IMR-90 (cell line): ENCODE measurements at regions of chr14 and their contacts with region 1.

Region 1: DNA sequence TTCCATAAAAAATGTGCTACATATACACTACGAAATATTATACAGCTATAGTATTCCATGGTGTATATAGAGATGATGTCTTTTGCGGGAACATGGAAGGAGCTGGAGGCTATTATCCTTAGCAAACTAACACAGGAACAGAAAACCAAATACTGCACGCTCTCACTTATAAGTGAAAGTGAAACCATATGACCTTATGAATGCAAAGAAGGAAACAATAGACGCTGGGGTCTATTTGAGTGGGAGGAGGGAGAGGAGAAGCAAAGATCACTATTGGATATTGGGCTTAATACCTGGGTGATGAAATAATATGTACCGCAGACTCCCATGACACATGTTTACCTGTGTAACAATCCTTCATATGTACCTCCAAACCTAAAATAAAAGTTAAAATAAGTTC is 142.8 kb downstream of the LRFN5 start:
- DNase-seq: no peak
- ATAC-seq: no peak
- H3K4me3 ChIP-seq: no peak overlapping the region
- H3K27ac ChIP-seq: no peak overlapping the region
- H3K4me1 ChIP-seq: no peaks in the 10 kb centered on the region
- H3K27me3 ChIP-seq: no peaks in the 10 kb centered on the region
- CTCF ChIP-seq: no peak
- POLR2A ChIP-seq: no peak
- RAD21 ChIP-seq: no peak

Region 2: GRCh38 chr14:40296821-40297220 is 1452.6 kb before region 1 on chr14:
- CTCF ChIA-PET with region 1: no interaction called
- POLR2A ChIA-PET with region 1: no interaction called
- dilution Hi-C with region 1: no loop called
- in situ Hi-C with region 1: no loop called
- intact Hi-C with region 1: loop called (anchors 5 kb)
- DNase-seq: no peak
- ATAC-seq: no peak
- H3K4me3 ChIP-seq: no peak overlapping the region
- H3K27ac ChIP-seq: no peak overlapping the region
- H3K4me1 ChIP-seq: no peaks in the 10 kb centered on the region
- H3K27me3 ChIP-seq: no peaks in the 10 kb centered on the region
- CTCF ChIP-seq: no peak
- POLR2A ChIP-seq: no peak
- RAD21 ChIP-seq: no peak

Region 3: DNA sequence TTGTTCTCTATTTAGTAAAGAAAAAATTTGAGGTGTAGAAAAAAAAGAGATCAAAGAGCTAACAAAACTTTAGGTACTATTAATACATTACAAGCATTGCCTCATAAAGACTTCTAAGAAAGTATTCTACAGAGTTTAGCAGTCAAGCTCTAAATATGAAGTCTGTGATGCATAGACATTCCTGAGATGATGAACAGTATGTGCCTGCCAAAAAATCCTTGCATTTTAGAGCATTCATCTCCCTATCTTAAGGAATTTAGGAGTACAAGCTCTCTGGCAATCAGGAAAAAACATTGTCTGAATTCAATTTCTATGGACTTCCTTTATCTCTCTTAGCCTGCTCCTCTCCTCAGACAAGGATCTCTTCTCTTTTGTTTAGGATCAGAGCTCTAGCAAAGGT is 345.3 kb before region 1 on chr14:
- CTCF ChIA-PET with region 1: no interaction called
- POLR2A ChIA-PET with region 1: no interaction called
- dilution Hi-C with region 1: no loop called
- in situ Hi-C with region 1: no loop called
- intact Hi-C with region 1: no loop called
- DNase-seq: no peak
- ATAC-seq: no peak
- H3K4me3 ChIP-seq: no peak overlapping the region
- H3K27ac ChIP-seq: no peak overlapping the region
- H3K4me1 ChIP-seq: no peaks in the 10 kb centered on the region
- H3K27me3 ChIP-seq: no peaks in the 10 kb centered on the region
- CTCF ChIP-seq: no peak
- POLR2A ChIP-seq: no peak
- RAD21 ChIP-seq: no peak

Region 4: GRCh38 chr14:41824441-41824840 is 75.0 kb after region 1 on chr14:
- CTCF ChIA-PET with region 1: no interaction called
- POLR2A ChIA-PET with region 1: no interaction called
- dilution Hi-C with region 1: no loop called
- in situ Hi-C with region 1: no loop called
- intact Hi-C with region 1: no loop called
- DNase-seq: no peak
- ATAC-seq: no peak
- H3K4me3 ChIP-seq: no peak overlapping the region
- H3K27ac ChIP-seq: no peak overlapping the region
- H3K4me1 ChIP-seq: no peaks in the 10 kb centered on the region
- H3K27me3 ChIP-seq: no peaks in the 10 kb centered on the region
- CTCF ChIP-seq: no peak
- POLR2A ChIP-seq: no peak
- RAD21 ChIP-seq: no peak